ENCODE measurements at regions of chr14 and their contacts with region 1.

Region 1: GRCh38 chr14:66359500-66359899 is 126.7 kb upstream of the CCDC196 start:
- DNase-seq: peak in 15 of 35 experiments; percentile 0 to 78 (median 13)
- ATAC-seq: peak in 1 of 4 experiments; percentile 34
- H3K4me3 ChIP-seq: no peak overlapping the region
- H3K4me3 Mint-ChIP-seq: no peak overlapping the region
- H3K27ac ChIP-seq: no peak overlapping the region
- H3K27ac Mint-ChIP-seq: no peak overlapping the region
- H3K4me1 ChIP-seq: no peaks in the 10 kb centered on the region
- H3K4me1 Mint-ChIP-seq: no peaks in the 10 kb centered on the region
- H3K27me3 ChIP-seq: no peaks in the 10 kb centered on the region
- H3K27me3 Mint-ChIP-seq: no peaks in the 10 kb centered on the region

Region 2: DNA sequence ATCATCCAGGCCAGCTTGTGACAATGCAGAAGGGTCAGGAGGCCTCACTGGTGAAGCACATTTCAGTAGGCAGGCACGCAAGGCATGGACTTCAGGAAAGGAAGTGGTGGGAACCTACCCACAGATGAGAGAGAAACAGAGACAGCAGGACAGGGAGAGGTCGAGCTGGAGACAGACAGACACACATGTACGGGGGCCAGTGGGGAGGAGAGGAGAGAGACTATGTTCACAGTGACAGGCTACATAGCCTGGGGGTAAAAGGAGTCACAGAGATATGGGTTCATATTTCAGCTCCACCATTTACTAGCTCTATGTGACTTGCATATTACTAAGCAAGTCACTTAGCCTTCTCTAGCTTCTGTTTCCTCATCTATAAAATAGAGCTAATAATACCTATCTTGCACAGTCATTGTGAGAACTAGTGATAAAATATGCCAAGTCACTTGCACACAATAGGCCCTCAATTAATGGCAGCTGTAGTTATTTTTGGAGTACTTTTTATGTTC is 1038.1 kb before region 1 on chr14:
- CTCF ChIA-PET with region 1: no interaction called
- POLR2A ChIA-PET with region 1: no interaction called
- DNase-seq: no peak
- ATAC-seq: peak in 3 of 4 experiments; percentile 37 to 49 (median 44)
- H3K4me3 ChIP-seq: no peak overlapping the region
- H3K4me3 Mint-ChIP-seq: no peak overlapping the region
- H3K27ac ChIP-seq: no peak overlapping the region
- H3K27ac Mint-ChIP-seq: no peak overlapping the region
- H3K4me1 ChIP-seq: peaks cover 14% of the 10 kb centered on the region in 2 experiments
- H3K4me1 Mint-ChIP-seq: peaks cover 24 to 38% (median 27%) of the 10 kb centered on the region in 3 donors
- H3K27me3 ChIP-seq: no peaks in the 10 kb centered on the region
- H3K27me3 Mint-ChIP-seq: no peaks in the 10 kb centered on the region

Region 3: GRCh38 chr14:66109426-66109825 is 250.1 kb before region 1 on chr14:
- CTCF ChIA-PET with region 1: no interaction called
- POLR2A ChIA-PET with region 1: no interaction called
- DNase-seq: no peak
- ATAC-seq: no peak
- H3K4me3 ChIP-seq: no peak overlapping the region
- H3K4me3 Mint-ChIP-seq: no peak overlapping the region
- H3K27ac ChIP-seq: no peak overlapping the region
- H3K27ac Mint-ChIP-seq: no peak overlapping the region
- H3K4me1 ChIP-seq: no peaks in the 10 kb centered on the region
- H3K4me1 Mint-ChIP-seq: no peaks in the 10 kb centered on the region
- H3K27me3 ChIP-seq: peaks cover 0 to 5% of the 10 kb centered on the region in 2 experiments
- H3K27me3 Mint-ChIP-seq: peaks cover 3 to 7% of the 10 kb centered on the region in 2 donors

Region 4: GRCh38 chr14:66288511-66288910 is 71.0 kb before region 1 on chr14:
- CTCF ChIA-PET with region 1: no interaction called
- POLR2A ChIA-PET with region 1: no interaction called
- DNase-seq: no peak
- ATAC-seq: no peak
- H3K4me3 ChIP-seq: no peak overlapping the region
- H3K4me3 Mint-ChIP-seq: no peak overlapping the region
- H3K27ac ChIP-seq: no peak overlapping the region
- H3K27ac Mint-ChIP-seq: no peak overlapping the region
- H3K4me1 ChIP-seq: no peaks in the 10 kb centered on the region
- H3K4me1 Mint-ChIP-seq: peaks cover 0 to under 1% (median 0%) of the 10 kb centered on the region in 3 donors
- H3K27me3 ChIP-seq: no peaks in the 10 kb centered on the region
- H3K27me3 Mint-ChIP-seq: peaks cover 0 to 2% of the 10 kb centered on the region in 2 donors

Region 5: GRCh38 chr14:66395300-66395699 is 35.8 kb after region 1 on chr14:
- CTCF ChIA-PET with region 1: interaction called in 1 of 2 experiments, 35 read pairs
- POLR2A ChIA-PET with region 1: no interaction called
- DNase-seq: peak in 12 of 35 experiments; percentile 1 to 51 (median 6)
- ATAC-seq: peak; percentile 38 to 72 (median 53)
- H3K4me3 ChIP-seq: no peak overlapping the region
- H3K4me3 Mint-ChIP-seq: no peak overlapping the region
- H3K27ac ChIP-seq: no peak overlapping the region
- H3K27ac Mint-ChIP-seq: peak overlapping the region in 1 of 2 donors; percentile 29
- H3K4me1 ChIP-seq: no peaks in the 10 kb centered on the region
- H3K4me1 Mint-ChIP-seq: peaks cover 6 to 8% (median 6%) of the 10 kb centered on the region in 3 donors
- H3K27me3 ChIP-seq: no peaks in the 10 kb centered on the region
- H3K27me3 Mint-ChIP-seq: peaks cover 0 to 3% of the 10 kb centered on the region in 2 donors

Region 6: DNA sequence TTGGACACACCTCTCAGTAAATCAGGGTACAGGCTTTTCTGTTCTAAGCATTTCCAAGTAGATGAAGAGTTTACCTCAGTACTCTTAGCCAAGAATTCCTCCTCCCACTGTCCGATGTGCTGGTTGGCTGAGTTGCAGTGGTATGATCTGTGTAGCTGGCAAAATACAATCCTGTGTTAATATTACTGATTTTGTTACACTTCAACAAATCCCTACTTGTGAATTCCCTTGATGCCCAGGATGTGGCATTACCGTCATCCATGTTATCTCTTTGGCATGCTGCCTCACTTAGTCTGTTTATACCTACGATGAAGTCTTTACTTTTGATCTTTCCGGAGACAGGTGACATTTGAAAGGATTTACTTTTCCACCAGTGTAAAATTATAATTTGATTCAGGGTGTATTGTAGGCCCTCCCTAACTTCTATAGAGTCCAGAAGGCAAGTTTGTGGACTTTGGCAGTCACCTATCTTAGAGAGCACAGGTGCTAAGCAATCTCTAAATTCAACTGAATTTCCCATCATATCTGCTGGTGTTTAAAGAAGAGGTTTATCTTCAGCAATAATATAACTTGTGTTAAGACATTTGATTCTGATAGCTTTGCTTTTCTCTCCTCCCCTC is 136.8 kb after region 1 on chr14:
- CTCF ChIA-PET with region 1: interaction called, 3 to 12 read pairs
- POLR2A ChIA-PET with region 1: no interaction called
- DNase-seq: no peak
- ATAC-seq: no peak
- H3K4me3 ChIP-seq: no peak overlapping the region
- H3K4me3 Mint-ChIP-seq: peak overlapping the region in 1 of 3 donors; percentile 20
- H3K27ac ChIP-seq: no peak overlapping the region
- H3K27ac Mint-ChIP-seq: peak overlapping the region; percentile 59 to 86
- H3K4me1 ChIP-seq: peaks cover 0 to 7% of the 10 kb centered on the region in 2 experiments
- H3K4me1 Mint-ChIP-seq: peaks cover 18 to 20% (median 18%) of the 10 kb centered on the region in 3 donors
- H3K27me3 ChIP-seq: no peaks in the 10 kb centered on the region
- H3K27me3 Mint-ChIP-seq: no peaks in the 10 kb centered on the region

Region 7: GRCh38 chr14:67285876-67286452 is 926.5 kb after region 1 on chr14:
- CTCF ChIA-PET with region 1: interaction called, 6 to 22 read pairs
- POLR2A ChIA-PET with region 1: no interaction called
- DNase-seq: peak in 1 of 35 experiments; percentile 57
- ATAC-seq: no peak
- H3K4me3 ChIP-seq: no peak overlapping the region
- H3K4me3 Mint-ChIP-seq: no peak overlapping the region
- H3K27ac ChIP-seq: no peak overlapping the region
- H3K27ac Mint-ChIP-seq: no peak overlapping the region
- H3K4me1 ChIP-seq: no peaks in the 10 kb centered on the region
- H3K4me1 Mint-ChIP-seq: peaks cover 0 to 9% (median 5%) of the 10 kb centered on the region in 3 donors
- H3K27me3 ChIP-seq: no peaks in the 10 kb centered on the region
- H3K27me3 Mint-ChIP-seq: no peaks in the 10 kb centered on the region